ENCODE measurements at regions of chr16 and their contacts with region 1.

Region 1: DNA sequence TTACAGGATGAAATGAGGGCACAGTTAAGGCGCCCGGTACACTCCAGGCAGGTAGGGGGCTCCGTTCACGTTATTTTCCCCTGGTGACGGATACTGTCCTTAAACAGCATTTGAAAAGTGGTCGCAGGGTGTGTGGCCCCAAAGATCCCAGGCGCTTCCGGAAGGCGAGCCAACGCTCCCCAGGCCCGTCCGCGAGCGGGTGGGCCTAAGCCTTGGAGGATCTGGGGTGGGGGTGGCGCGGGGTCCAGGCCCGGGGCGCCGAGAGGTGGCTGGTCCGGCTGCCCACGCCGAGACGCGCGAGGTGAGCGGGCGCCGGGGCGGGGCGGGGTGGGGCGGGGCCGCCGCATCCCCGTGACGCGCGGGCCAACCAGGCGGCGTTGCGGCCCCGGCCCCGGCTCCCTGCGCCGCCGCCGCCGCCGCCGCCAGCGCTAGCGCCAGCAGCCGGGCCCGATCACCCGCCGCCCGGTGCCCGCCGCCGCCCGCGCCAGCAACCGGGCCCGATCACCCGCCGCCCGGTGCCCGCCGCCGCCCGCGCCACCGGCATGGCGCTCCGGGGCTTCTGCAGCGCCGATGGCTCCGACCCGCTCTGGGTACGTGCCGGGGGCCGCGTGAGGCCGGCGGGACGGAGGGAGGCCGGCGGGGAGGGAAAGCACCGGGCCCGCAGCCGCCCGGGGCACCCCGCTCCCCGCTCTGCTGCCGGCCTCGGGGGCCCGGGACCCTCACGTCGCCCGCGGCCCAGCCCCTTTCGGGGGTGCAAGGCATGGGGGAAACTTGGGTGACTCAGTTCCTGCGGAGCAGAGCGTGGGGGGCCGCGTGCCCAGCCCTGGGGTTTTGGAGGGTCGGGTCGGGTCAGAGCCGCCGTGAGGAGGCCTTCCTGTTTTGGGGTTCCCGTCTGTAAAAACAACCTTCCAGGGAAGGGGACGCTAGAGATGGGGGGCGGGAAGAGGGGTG is at the start of gene ABCC1:
- DNase-seq: peak; percentile 31 to 88 (median 48)
- ATAC-seq: peak; percentile 69
- H3K4me3 ChIP-seq: peak within 1 kb of the TSS; percentile 88
- H3K4me3 Mint-ChIP-seq: peak within 1 kb of the TSS; percentile 98
- H3K27ac ChIP-seq: peak within 1 kb of the TSS; percentile 48 to 86
- H3K27ac Mint-ChIP-seq: peak within 1 kb of the TSS; percentile 94
- H3K4me1 ChIP-seq: peaks cover 52% of the 10 kb centered on the region
- H3K4me1 Mint-ChIP-seq: peaks cover 40% of the 10 kb centered on the region
- H3K27me3 ChIP-seq: no peaks in the 10 kb centered on the region
- H3K27me3 Mint-ChIP-seq: no peaks in the 10 kb centered on the region
- CTCF ChIP-seq: peak; percentile 22
- total RNA-seq, gene ABCC1: 42.9 to 44.8 TPM

Region 2: DNA sequence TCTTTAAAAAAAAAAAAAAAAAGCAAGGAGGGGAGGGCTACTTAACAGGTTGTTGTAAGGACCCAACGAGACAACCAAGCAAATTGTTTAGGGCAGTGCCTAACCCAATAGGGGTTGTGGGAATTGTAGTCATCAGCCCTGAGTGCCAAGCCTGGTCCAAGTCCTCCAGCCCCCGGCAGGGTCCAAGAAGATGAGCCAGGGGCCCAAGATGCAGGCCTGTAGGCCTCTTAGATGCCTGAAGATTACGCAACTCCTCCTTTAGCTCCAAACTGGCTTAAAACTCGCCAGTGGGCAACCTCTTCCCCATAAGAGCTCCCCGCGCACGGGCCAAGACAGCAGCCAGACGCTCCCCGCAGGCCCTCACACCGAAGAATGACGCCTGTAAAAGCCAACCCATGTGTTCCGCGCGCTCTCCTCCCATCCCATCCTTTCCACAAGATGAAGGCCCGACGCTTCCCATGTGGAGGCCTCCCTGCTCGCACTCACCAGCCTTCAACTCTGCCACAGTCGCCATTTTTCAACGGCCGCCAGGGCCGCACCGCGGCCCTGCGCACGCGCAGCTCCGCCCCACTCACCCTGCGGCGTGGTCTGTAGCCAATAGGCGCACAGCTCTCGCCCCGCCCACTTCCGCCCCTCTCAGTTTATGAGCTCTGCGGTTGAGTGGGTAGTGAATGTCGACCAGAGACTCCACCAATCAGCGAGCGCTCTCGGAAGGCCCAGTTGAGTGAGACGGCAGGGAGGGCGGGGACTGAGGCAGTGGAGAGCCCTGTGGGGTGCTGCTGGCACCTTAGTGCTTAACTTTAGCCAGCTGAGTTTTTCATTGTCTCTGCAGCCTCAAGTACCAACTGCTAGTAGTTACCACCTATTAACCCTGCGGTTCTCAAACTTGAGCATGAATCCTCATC is 61.2 kb before region 1 on chr16 and contains the start of gene CEP20:
- CTCF ChIA-PET with region 1: interaction called, 7 read pairs
- POLR2A ChIA-PET with region 1: interaction called, 20 read pairs
- intact Hi-C with region 1: loop called (anchors 1 kb)
- DNase-seq: peak; percentile 99 to 100 (median 100)
- ATAC-seq: peak; percentile 97
- H3K4me3 ChIP-seq: peak within 1 kb of the TSS; percentile 88
- H3K4me3 Mint-ChIP-seq: peak within 1 kb of the TSS; percentile 99
- H3K27ac ChIP-seq: peak within 1 kb of the TSS; percentile 74 to 77
- H3K27ac Mint-ChIP-seq: peak within 1 kb of the TSS; percentile 91
- H3K4me1 ChIP-seq: peaks cover 24% of the 10 kb centered on the region
- H3K4me1 Mint-ChIP-seq: peaks cover 30% of the 10 kb centered on the region
- H3K27me3 ChIP-seq: no peaks in the 10 kb centered on the region
- H3K27me3 Mint-ChIP-seq: no peaks in the 10 kb centered on the region
- CTCF ChIP-seq: no peak
- total RNA-seq, gene CEP20: 14.4 to 15.5 TPM

Region 3: DNA sequence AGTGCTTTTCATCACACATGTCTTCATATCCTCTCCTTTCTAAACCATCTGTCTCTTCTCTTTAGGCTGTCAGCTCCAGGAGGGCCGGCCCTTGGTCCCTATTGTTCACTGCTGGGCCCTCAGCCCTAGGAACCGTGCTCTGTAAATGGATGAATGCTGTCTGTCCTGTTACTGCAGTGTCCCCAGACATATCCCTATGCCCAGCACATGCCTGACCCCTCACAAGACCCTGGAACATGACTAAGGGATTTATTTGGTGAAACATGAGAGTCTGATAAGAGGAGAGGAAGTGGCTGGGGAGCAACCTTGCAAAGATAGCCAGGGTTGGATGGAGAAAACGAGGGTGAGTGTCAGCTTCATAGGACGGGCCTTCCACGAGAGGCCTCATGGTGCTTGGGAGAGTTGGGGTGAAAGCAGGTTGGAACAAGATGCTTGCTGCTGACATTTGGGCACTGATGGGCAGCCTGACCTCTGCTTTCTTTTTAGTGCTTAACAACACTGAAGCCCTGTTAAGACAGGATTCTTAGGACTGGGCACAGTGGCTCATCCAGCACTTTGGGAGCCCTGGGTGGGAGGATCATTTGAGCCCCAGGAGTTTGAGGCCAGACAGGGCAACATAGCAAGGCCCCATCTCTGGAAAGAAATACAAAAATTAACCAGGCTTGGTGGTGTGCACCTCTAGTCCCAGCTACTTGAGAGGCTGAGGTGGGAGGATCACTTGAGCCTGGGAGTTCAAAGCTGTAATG is 39.0 kb after region 1 on chr16:
- CTCF ChIA-PET with region 1: no interaction called
- POLR2A ChIA-PET with region 1: no interaction called
- intact Hi-C with region 1: loop called in 1 of 2 experiments (anchors 5 kb)
- DNase-seq: no peak
- ATAC-seq: no peak
- H3K4me3 ChIP-seq: no peak overlapping the region
- H3K4me3 Mint-ChIP-seq: no peak overlapping the region
- H3K27ac ChIP-seq: no peak overlapping the region
- H3K27ac Mint-ChIP-seq: peak overlapping the region; percentile 22
- H3K4me1 ChIP-seq: peaks cover 19% of the 10 kb centered on the region
- H3K4me1 Mint-ChIP-seq: peaks cover 58% of the 10 kb centered on the region
- H3K27me3 ChIP-seq: no peaks in the 10 kb centered on the region
- H3K27me3 Mint-ChIP-seq: no peaks in the 10 kb centered on the region
- CTCF ChIP-seq: no peak

Region 4: GRCh38 chr16:16025214-16025968 is 75.9 kb after region 1 on chr16:
- CTCF ChIA-PET with region 1: interaction called, 3 read pairs
- POLR2A ChIA-PET with region 1: interaction called, 5 read pairs
- intact Hi-C with region 1: loop called in 1 of 2 experiments (anchors 1 kb)
- DNase-seq: peak in 11 of 14 experiments; percentile 18 to 79 (median 44)
- ATAC-seq: peak; percentile 77
- H3K4me3 ChIP-seq: no peak overlapping the region
- H3K4me3 Mint-ChIP-seq: peak overlapping the region; percentile 59
- H3K27ac ChIP-seq: peak overlapping the region; percentile 18 to 76
- H3K27ac Mint-ChIP-seq: peak overlapping the region; percentile 90
- H3K4me1 ChIP-seq: peaks cover 24% of the 10 kb centered on the region
- H3K4me1 Mint-ChIP-seq: peaks cover 29% of the 10 kb centered on the region
- H3K27me3 ChIP-seq: no peaks in the 10 kb centered on the region
- H3K27me3 Mint-ChIP-seq: no peaks in the 10 kb centered on the region
- CTCF ChIP-seq: no peak

Region 5: GRCh38 chr16:16127469-16128116 is 178.1 kb after region 1 on chr16:
- CTCF ChIA-PET with region 1: no interaction called
- POLR2A ChIA-PET with region 1: no interaction called
- intact Hi-C with region 1: loop called (anchors 1 to 2 kb)
- DNase-seq: peak; percentile 34 to 79 (median 62)
- ATAC-seq: peak; percentile 93
- H3K4me3 ChIP-seq: no peak overlapping the region
- H3K4me3 Mint-ChIP-seq: no peak overlapping the region
- H3K27ac ChIP-seq: no peak overlapping the region
- H3K27ac Mint-ChIP-seq: peak overlapping the region; percentile 8
- H3K4me1 ChIP-seq: no peaks in the 10 kb centered on the region
- H3K4me1 Mint-ChIP-seq: peaks cover 4% of the 10 kb centered on the region
- H3K27me3 ChIP-seq: no peaks in the 10 kb centered on the region
- H3K27me3 Mint-ChIP-seq: no peaks in the 10 kb centered on the region
- CTCF ChIP-seq: peak; percentile 82

Measured in CD4-positive, alpha-beta T cell (primary cell).